Activated CD4-positive, alpha-beta T cell treated with anti-CD3 and anti-CD28 coated beads for 36 hours (primary cell): ENCODE measurements at regions of chr10 and their contacts with region 1.

Region 1: GRCh38 chr10:69506834-69507721 is 55.8 kb downstream of the TSPAN15 start:
- DNase-seq: peak; percentile 17
- ATAC-seq: peak; percentile 33
- H3K4me3 Mint-ChIP-seq: peak overlapping the region; percentile 60
- H3K27ac Mint-ChIP-seq: peak overlapping the region; percentile 89
- H3K4me1 Mint-ChIP-seq: peaks cover 11% of the 10 kb centered on the region
- H3K27me3 Mint-ChIP-seq: no peaks in the 10 kb centered on the region

Region 2: GRCh38 chr10:69425511-69426298 is 81.4 kb before region 1 on chr10:
- CTCF ChIA-PET with region 1: interaction called, 8 read pairs
- POLR2A ChIA-PET with region 1: no interaction called
- intact Hi-C with region 1: loop called (anchors 1 kb)
- DNase-seq: no peak
- ATAC-seq: peak; percentile 55
- H3K4me3 Mint-ChIP-seq: no peak overlapping the region
- H3K27ac Mint-ChIP-seq: peak overlapping the region; percentile 3
- H3K4me1 Mint-ChIP-seq: peaks cover 40% of the 10 kb centered on the region
- H3K27me3 Mint-ChIP-seq: no peaks in the 10 kb centered on the region

Region 3: GRCh38 chr10:69558559-69558958 is 51.5 kb after region 1 on chr10:
- CTCF ChIA-PET with region 1: no interaction called
- POLR2A ChIA-PET with region 1: no interaction called
- intact Hi-C with region 1: no loop called
- DNase-seq: peak; percentile 27
- ATAC-seq: peak; percentile 53
- H3K4me3 Mint-ChIP-seq: no peak overlapping the region
- H3K27ac Mint-ChIP-seq: no peak overlapping the region
- H3K4me1 Mint-ChIP-seq: peaks cover 10% of the 10 kb centered on the region
- H3K27me3 Mint-ChIP-seq: peaks cover under 1% of the 10 kb centered on the region

Region 4: DNA sequence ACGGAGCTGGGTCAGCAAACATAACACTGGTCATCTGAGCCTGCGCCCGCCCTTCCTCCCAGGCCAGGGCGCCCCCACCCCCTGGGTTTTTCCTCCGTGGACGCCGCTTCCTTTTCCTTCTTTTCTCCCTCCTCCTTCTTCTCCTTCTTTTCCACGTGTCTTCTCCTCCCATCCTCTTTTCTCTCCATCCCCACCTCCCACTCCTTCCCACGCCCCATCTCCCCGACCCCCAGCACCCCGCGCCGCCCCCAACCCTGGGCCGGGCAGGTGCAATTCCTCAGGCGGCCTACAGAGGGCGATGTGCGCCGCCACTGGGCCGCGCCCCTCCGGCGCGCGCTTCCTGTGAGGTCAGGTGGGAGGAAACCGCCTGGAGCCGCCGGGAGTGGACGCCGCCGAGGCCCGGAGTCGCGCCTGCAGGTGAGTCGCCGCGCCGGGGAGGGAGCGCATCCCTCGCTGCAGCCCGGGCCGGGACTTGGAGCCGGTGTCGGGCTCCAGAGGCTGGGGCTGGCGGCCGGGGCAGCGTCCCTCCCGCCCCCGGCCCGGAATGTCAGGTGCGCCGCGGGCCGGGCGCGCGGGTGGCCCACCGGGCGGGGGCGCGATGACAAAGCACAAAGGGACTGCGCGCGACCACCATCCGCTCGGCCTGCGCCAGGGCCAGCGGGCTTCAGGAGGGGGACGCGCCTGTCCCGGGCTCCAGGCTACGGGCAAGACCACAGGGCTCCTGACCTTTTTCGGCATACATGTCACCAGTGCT is 123.0 kb after region 1 on chr10 and contains the start of gene FAM241B:
- CTCF ChIA-PET with region 1: interaction called, 4 read pairs
- POLR2A ChIA-PET with region 1: no interaction called
- intact Hi-C with region 1: loop called in 1 of 2 experiments (anchors 2 kb)
- DNase-seq: peak; percentile 89
- ATAC-seq: peak; percentile 95
- H3K4me3 Mint-ChIP-seq: peak within 1 kb of the TSS; percentile 63
- H3K27ac Mint-ChIP-seq: peak within 1 kb of the TSS; percentile 47
- H3K4me1 Mint-ChIP-seq: peaks cover 16% of the 10 kb centered on the region
- H3K27me3 Mint-ChIP-seq: no peaks in the 10 kb centered on the region
- total RNA-seq, gene FAM241B: 6.3 to 9.6 TPM